CD8-positive, alpha-beta T cell (primary cell): ENCODE measurements at regions of chr16 and their contacts with region 1.

Region 1: GRCh38 chr16:14285513-14286385 is 214.6 kb downstream of the MRTFB start:
- DNase-seq: peak; percentile 91 to 100 (median 96)
- ATAC-seq: peak; percentile 80
- H3K4me3 ChIP-seq: peak overlapping the region; percentile 95 to 96
- H3K4me3 Mint-ChIP-seq: peak overlapping the region; percentile 91
- H3K27ac ChIP-seq: peak overlapping the region; percentile 57 to 63
- H3K27ac Mint-ChIP-seq: peak overlapping the region; percentile 91
- H3K4me1 ChIP-seq: peaks cover 9% of the 10 kb centered on the region
- H3K4me1 Mint-ChIP-seq: peaks cover 15% of the 10 kb centered on the region
- H3K27me3 ChIP-seq: no peaks in the 10 kb centered on the region
- H3K27me3 Mint-ChIP-seq: no peaks in the 10 kb centered on the region
- CTCF ChIP-seq: no peak

Region 2: GRCh38 chr16:14070877-14071575 is 214.7 kb before region 1 on chr16 and contains the start of gene MRTFB:
- CTCF ChIA-PET with region 1: no interaction called
- POLR2A ChIA-PET with region 1: no interaction called
- intact Hi-C with region 1: loop called (anchors 1 to 2 kb)
- DNase-seq: peak; percentile 67 to 90 (median 78)
- ATAC-seq: peak; percentile 88
- H3K4me3 ChIP-seq: peak within 1 kb of the TSS; percentile 60 to 83
- H3K4me3 Mint-ChIP-seq: peak within 1 kb of the TSS; percentile 89
- H3K27ac ChIP-seq: peak within 1 kb of the TSS; percentile 5 to 41
- H3K27ac Mint-ChIP-seq: peak within 1 kb of the TSS; percentile 81
- H3K4me1 ChIP-seq: peaks cover 11% of the 10 kb centered on the region
- H3K4me1 Mint-ChIP-seq: peaks cover 15% of the 10 kb centered on the region
- H3K27me3 ChIP-seq: no peaks in the 10 kb centered on the region
- H3K27me3 Mint-ChIP-seq: peaks cover 7% of the 10 kb centered on the region
- CTCF ChIP-seq: no peak
- total RNA-seq, gene MRTFB: 13.4 to 14.5 TPM

Region 3: DNA sequence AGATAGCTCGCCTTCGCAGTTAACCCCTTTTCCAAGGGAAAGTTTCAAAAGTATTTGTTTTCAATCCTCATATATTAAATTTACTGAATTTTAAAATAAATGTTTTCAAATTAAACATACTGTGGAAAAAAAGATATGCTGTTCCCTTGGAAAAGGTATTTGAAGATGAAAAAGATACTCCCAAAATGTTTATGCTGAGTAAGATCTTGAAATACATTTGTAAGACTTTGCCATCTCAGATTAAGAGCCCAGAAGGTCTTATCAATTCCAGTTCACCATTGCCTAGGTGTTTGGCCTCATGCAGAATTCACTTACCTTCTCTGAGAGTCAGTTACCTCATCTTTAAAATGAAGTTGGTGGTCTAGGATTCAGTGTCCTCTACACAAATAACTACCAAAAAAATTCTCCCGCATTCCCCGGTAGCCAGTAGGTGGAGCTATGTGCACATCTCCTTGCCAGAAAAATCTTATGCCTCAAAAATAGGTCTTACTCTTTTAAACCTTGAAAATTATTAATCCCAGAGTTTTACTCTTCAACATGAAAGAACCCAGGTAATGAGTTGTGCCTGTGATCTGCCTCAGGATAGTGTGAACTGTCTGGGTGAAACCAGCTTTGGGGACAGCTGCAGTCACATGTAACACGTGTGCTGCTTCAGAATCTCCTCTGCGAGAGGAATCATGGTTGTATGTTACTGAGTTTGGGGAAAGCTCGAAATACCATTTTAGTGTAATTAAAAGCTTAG is 36.3 kb before region 1 on chr16:
- CTCF ChIA-PET with region 1: no interaction called
- POLR2A ChIA-PET with region 1: no interaction called
- intact Hi-C with region 1: loop called in 1 of 2 experiments (anchors 2 kb)
- DNase-seq: peak; percentile 10 to 67 (median 51)
- ATAC-seq: no peak
- H3K4me3 ChIP-seq: no peak overlapping the region
- H3K4me3 Mint-ChIP-seq: no peak overlapping the region
- H3K27ac ChIP-seq: no peak overlapping the region
- H3K27ac Mint-ChIP-seq: no peak overlapping the region
- H3K4me1 ChIP-seq: no peaks in the 10 kb centered on the region
- H3K4me1 Mint-ChIP-seq: no peaks in the 10 kb centered on the region
- H3K27me3 ChIP-seq: no peaks in the 10 kb centered on the region
- H3K27me3 Mint-ChIP-seq: no peaks in the 10 kb centered on the region
- CTCF ChIP-seq: peak; percentile 83

Region 4: GRCh38 chr16:14300705-14301168 is 15.0 kb after region 1 on chr16:
- CTCF ChIA-PET with region 1: interaction called, 5 read pairs
- POLR2A ChIA-PET with region 1: interaction called, 3 read pairs
- intact Hi-C with region 1: loop called (anchors 2 kb)
- DNase-seq: peak in 6 of 9 experiments; percentile 27 to 64 (median 40)
- ATAC-seq: peak; percentile 50
- H3K4me3 ChIP-seq: peak overlapping the region in 1 of 2 experiments; percentile 31
- H3K4me3 Mint-ChIP-seq: peak overlapping the region; percentile 86
- H3K27ac ChIP-seq: no peak overlapping the region
- H3K27ac Mint-ChIP-seq: no peak overlapping the region
- H3K4me1 ChIP-seq: peaks cover 16% of the 10 kb centered on the region
- H3K4me1 Mint-ChIP-seq: peaks cover 16% of the 10 kb centered on the region
- H3K27me3 ChIP-seq: peaks cover 0 to 9% of the 10 kb centered on the region in 2 experiments
- H3K27me3 Mint-ChIP-seq: peaks cover 2% of the 10 kb centered on the region
- CTCF ChIP-seq: peak; percentile 28

Region 5: DNA sequence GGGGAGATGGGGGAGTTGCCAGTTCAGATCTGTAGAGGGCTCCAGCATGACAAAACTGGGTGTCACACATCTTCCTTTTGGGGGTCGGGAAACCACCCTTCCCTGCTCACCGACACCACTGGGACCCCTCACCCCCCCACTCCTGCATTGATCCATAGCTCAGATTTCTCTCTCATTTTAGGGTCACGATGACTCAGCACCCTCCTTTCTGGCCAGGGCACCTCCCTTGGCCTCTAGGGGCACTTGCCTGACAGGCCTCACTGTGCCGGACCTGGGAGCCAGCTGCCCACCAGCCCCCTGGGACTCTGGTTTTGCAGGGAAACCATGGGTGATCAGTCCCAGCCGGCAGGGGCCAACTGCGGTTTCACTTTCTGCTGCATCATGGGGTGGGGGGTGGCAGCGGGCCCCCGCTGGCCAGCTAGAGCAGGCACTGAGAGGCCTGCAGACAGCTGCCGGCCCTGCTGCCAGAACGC is 24.8 kb after region 1 on chr16:
- CTCF ChIA-PET with region 1: interaction called, 4 read pairs
- POLR2A ChIA-PET with region 1: interaction called, 10 read pairs
- intact Hi-C with region 1: loop called in 1 of 2 experiments (anchors 1 kb)
- DNase-seq: no peak
- ATAC-seq: no peak
- H3K4me3 ChIP-seq: no peak overlapping the region
- H3K4me3 Mint-ChIP-seq: no peak overlapping the region
- H3K27ac ChIP-seq: no peak overlapping the region
- H3K27ac Mint-ChIP-seq: no peak overlapping the region
- H3K4me1 ChIP-seq: peaks cover 36% of the 10 kb centered on the region
- H3K4me1 Mint-ChIP-seq: peaks cover 41% of the 10 kb centered on the region
- H3K27me3 ChIP-seq: no peaks in the 10 kb centered on the region
- H3K27me3 Mint-ChIP-seq: no peaks in the 10 kb centered on the region
- CTCF ChIP-seq: no peak

Region 6: GRCh38 chr16:14608111-14608566 is 322.4 kb after region 1 on chr16:
- CTCF ChIA-PET with region 1: no interaction called
- POLR2A ChIA-PET with region 1: no interaction called
- intact Hi-C with region 1: no loop called
- DNase-seq: no peak
- ATAC-seq: no peak
- H3K4me3 ChIP-seq: no peak overlapping the region
- H3K4me3 Mint-ChIP-seq: no peak overlapping the region
- H3K27ac ChIP-seq: no peak overlapping the region
- H3K27ac Mint-ChIP-seq: no peak overlapping the region
- H3K4me1 ChIP-seq: no peaks in the 10 kb centered on the region
- H3K4me1 Mint-ChIP-seq: no peaks in the 10 kb centered on the region
- H3K27me3 ChIP-seq: no peaks in the 10 kb centered on the region
- H3K27me3 Mint-ChIP-seq: no peaks in the 10 kb centered on the region
- CTCF ChIP-seq: no peak

Region 7: GRCh38 chr16:14632692-14633569 is 347.2 kb after region 1 on chr16 and contains the start of gene BFAR:
- CTCF ChIA-PET with region 1: no interaction called
- POLR2A ChIA-PET with region 1: interaction called, 3 read pairs
- intact Hi-C with region 1: loop called (anchors 1 to 2 kb)
- DNase-seq: peak; percentile 98 to 100 (median 99)
- ATAC-seq: peak; percentile 68
- H3K4me3 ChIP-seq: peak within 1 kb of the TSS; percentile 95 to 100
- H3K4me3 Mint-ChIP-seq: peak within 1 kb of the TSS; percentile 100
- H3K27ac ChIP-seq: peak within 1 kb of the TSS; percentile 82 to 94
- H3K27ac Mint-ChIP-seq: peak within 1 kb of the TSS; percentile 99
- H3K4me1 ChIP-seq: peaks cover 60% of the 10 kb centered on the region
- H3K4me1 Mint-ChIP-seq: peaks cover 73% of the 10 kb centered on the region
- H3K27me3 ChIP-seq: no peaks in the 10 kb centered on the region
- H3K27me3 Mint-ChIP-seq: no peaks in the 10 kb centered on the region
- CTCF ChIP-seq: no peak
- total RNA-seq, gene BFAR: 34.0 to 41.7 TPM

Region 8: DNA sequence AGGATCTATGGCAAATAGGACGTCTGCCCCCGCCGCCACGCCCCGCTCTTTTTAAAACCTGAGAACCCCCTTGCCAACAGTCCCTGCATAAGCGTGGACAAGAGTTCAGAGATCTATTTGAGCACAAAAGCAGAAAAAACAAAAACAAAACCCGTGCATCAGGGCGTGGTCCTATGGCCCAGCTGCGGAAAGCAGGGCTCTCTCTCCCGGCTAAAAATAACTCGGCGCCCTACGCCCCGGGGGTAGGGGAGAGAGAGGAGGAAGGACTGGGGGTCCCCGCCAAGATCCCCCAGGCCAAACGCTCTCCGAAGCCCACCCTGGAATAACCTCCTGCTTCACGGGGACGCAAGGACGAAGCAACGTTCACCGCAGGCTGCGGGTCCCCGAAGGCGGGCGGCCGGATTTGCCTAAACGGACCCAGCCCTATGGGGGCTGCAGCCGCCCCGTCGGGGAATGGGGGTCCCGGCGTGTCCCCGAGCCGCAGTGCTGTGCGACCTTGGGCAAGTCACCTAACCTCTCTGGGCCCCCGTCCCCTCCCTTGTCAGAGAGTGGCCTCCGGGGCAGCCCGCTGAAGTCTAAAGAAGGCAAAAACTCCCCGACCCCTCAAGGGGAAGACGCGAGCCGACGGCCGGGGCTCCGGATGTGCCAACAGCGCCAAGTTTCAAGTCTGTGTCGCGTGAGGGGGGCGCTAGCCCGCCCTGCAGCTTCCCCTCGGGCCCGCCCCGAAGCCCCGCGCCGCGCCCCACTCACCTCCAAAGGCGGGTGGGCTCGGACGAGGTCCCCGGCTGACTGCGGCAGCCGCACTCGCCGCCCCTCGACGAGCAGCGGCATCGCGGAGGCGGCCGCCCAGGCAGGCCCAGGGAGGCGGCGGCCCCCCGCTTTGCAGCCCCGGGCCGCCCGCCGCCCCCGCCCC is 769.6 kb after region 1 on chr16:
- CTCF ChIA-PET with region 1: no interaction called
- POLR2A ChIA-PET with region 1: no interaction called
- intact Hi-C with region 1: loop called in 1 of 2 experiments (anchors 5 kb)
- DNase-seq: peak in 6 of 9 experiments; percentile 62 to 90 (median 82)
- ATAC-seq: peak; percentile 75
- H3K4me3 ChIP-seq: peak overlapping the region; percentile 86 to 94
- H3K4me3 Mint-ChIP-seq: peak overlapping the region; percentile 87
- H3K27ac ChIP-seq: peak overlapping the region; percentile 67 to 68
- H3K27ac Mint-ChIP-seq: peak overlapping the region; percentile 70
- H3K4me1 ChIP-seq: peaks cover 14% of the 10 kb centered on the region
- H3K4me1 Mint-ChIP-seq: peaks cover 16% of the 10 kb centered on the region
- H3K27me3 ChIP-seq: no peaks in the 10 kb centered on the region
- H3K27me3 Mint-ChIP-seq: no peaks in the 10 kb centered on the region
- CTCF ChIP-seq: peak; percentile 32